ENCODE measurements at regions of chr18 and their contacts with region 1.

Region 1: GRCh38 chr18:8301427-8302172 is 307.6 kb upstream of the RAB12 start:
- DNase-seq: peak; percentile 16
- ATAC-seq: peak; percentile 19
- H3K4me3 ChIP-seq: no peak overlapping the region
- H3K27ac ChIP-seq: no peak overlapping the region
- H3K4me1 ChIP-seq: peaks cover 20% of the 10 kb centered on the region
- H3K27me3 ChIP-seq: no peaks in the 10 kb centered on the region
- CTCF ChIP-seq: no peak

Region 2: DNA sequence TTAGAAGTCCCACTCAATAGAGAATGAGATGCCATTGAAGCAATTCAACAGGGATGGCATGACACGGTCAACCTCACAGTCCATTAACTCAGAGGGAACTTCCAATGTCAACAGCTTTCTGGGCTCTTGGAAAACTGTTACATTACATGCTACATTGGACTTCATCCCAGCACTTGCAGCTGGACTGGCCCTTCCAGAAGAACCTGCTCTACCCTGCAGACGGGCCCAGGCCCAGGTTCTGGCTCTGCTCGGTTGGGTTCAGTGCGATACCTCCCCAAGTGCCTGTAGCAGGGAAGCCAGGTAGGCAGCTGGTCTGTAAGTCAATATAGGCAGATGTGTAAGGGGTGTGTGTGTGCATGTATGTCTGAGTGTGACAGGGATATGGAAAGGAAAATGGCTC is 1197.0 kb before region 1 on chr18:
- CTCF ChIA-PET with region 1: no interaction called
- POLR2A ChIA-PET with region 1: interaction called, 10 read pairs
- intact Hi-C with region 1: no loop called
- DNase-seq: no peak
- ATAC-seq: no peak
- H3K4me3 ChIP-seq: no peak overlapping the region
- H3K27ac ChIP-seq: no peak overlapping the region
- H3K4me1 ChIP-seq: no peaks in the 10 kb centered on the region
- H3K27me3 ChIP-seq: peaks cover 37% of the 10 kb centered on the region
- CTCF ChIP-seq: no peak

Region 3: GRCh38 chr18:8771930-8772329 is 470.3 kb after region 1 on chr18:
- CTCF ChIA-PET with region 1: interaction called, 13 read pairs
- POLR2A ChIA-PET with region 1: no interaction called
- intact Hi-C with region 1: no loop called
- DNase-seq: no peak
- ATAC-seq: no peak
- H3K4me3 ChIP-seq: no peak overlapping the region
- H3K27ac ChIP-seq: no peak overlapping the region
- H3K4me1 ChIP-seq: no peaks in the 10 kb centered on the region
- H3K27me3 ChIP-seq: no peaks in the 10 kb centered on the region
- CTCF ChIP-seq: no peak